ENCODE measurements at regions of chr19 and their contacts with region 1.

Region 1: DNA sequence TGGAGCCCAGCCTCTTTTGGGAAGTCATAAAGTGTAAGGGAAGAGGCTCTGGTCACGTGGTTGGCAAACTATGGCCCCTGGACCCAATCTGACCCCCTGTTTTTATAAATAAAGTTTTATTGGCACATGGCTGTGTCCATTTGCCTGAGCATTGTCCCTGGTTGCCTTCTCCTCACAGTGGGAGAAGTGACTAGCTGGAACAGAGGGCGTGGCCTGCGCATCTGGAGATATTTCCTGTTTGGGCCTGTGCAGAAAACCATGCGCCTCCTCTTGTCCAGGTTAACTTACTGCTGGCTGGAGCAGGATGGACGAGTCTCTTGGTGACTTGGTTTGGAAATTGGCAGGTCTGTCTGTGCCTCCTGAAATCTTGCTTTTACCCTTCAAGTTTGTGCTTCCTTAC is 48.3 kb downstream of the KDM4B start:
- DNase-seq: peak; percentile 63
- H3K4me3 ChIP-seq: no peak overlapping the region
- H3K27ac ChIP-seq: no peak overlapping the region
- H3K4me1 ChIP-seq: peaks cover 16% of the 10 kb centered on the region
- H3K27me3 ChIP-seq: no peaks in the 10 kb centered on the region
- CTCF ChIP-seq: no peak

Region 2: GRCh38 chr19:4976401-4977298 is 40.6 kb before region 1 on chr19:
- CTCF ChIA-PET with region 1: no interaction called
- dilution Hi-C with region 1: no loop called
- in situ Hi-C with region 1: no loop called
- intact Hi-C with region 1: loop called (anchors 1 kb)
- DNase-seq: peak; percentile 90
- H3K4me3 ChIP-seq: no peak overlapping the region
- H3K27ac ChIP-seq: peak overlapping the region; percentile 67
- H3K4me1 ChIP-seq: peaks cover 43% of the 10 kb centered on the region
- H3K27me3 ChIP-seq: no peaks in the 10 kb centered on the region
- CTCF ChIP-seq: peak; percentile 54 to 75

Region 3: GRCh38 chr19:5128251-5128935 is 111.2 kb after region 1 on chr19:
- CTCF ChIA-PET with region 1: no interaction called
- dilution Hi-C with region 1: no loop called
- in situ Hi-C with region 1: no loop called
- intact Hi-C with region 1: no loop called
- DNase-seq: no peak
- H3K4me3 ChIP-seq: no peak overlapping the region
- H3K27ac ChIP-seq: no peak overlapping the region
- H3K4me1 ChIP-seq: no peaks in the 10 kb centered on the region
- H3K27me3 ChIP-seq: no peaks in the 10 kb centered on the region
- CTCF ChIP-seq: no peak

Region 4: DNA sequence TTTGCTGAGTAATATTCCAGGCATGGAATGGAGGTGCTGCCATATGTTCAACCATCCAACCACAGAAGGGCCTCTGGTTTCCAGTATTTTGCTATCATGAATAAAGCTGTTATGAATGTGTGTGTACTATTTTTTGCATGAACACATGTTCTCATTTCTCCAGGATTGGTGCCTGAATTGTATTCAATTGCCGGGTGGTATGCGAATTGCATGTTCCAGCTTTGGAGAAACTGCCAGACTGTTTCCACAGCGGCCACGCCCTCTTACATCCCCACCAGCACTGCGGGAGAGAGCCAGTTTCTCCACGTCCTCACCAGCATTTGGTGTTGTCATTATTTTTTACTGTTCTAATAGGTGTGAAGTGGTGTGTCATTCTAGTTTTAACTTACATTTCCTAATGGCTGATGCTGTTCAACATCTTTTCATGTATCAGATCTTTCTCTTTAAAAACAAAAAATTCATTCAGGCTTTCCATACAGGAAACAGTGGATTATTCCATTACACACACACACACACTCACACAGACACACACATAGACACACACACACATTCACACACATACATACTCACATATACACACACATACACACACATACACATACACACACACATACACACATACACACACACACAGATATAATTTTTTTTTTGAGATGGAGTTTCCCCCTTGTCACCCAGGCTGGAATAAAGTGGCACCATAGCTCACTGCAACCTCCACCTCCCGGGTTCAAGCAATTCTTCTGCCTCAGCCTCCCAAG is 169.2 kb after region 1 on chr19:
- CTCF ChIA-PET with region 1: no interaction called
- dilution Hi-C with region 1: no loop called
- in situ Hi-C with region 1: no loop called
- intact Hi-C with region 1: no loop called
- DNase-seq: peak; percentile 15
- H3K4me3 ChIP-seq: no peak overlapping the region
- H3K27ac ChIP-seq: no peak overlapping the region
- H3K4me1 ChIP-seq: no peaks in the 10 kb centered on the region
- H3K27me3 ChIP-seq: no peaks in the 10 kb centered on the region
- CTCF ChIP-seq: no peak

Region 5: GRCh38 chr19:5665796-5666513 is 648.7 kb after region 1 on chr19:
- CTCF ChIA-PET with region 1: no interaction called
- dilution Hi-C with region 1: no loop called
- in situ Hi-C with region 1: no loop called
- intact Hi-C with region 1: no loop called
- DNase-seq: peak; percentile 48
- H3K4me3 ChIP-seq: no peak overlapping the region
- H3K27ac ChIP-seq: no peak overlapping the region
- H3K4me1 ChIP-seq: no peaks in the 10 kb centered on the region
- H3K27me3 ChIP-seq: no peaks in the 10 kb centered on the region
- CTCF ChIP-seq: peak in 1 of 2 donors; percentile 22

Measured in mammary epithelial cell (primary cell).